Cardiac septum (tissue), 1 donor: ENCODE measurements at regions of chr21 and their contacts with region 1.

Region 1: GRCh38 chr21:42964546-42965225 is 9.7 kb upstream of the PKNOX1 start:
- DNase-seq: no peak

Region 2: GRCh38 chr21:42923541-42924432 is 40.9 kb before region 1 on chr21:
- intact Hi-C with region 1: no loop called
- DNase-seq: peak; percentile 75

Region 3: DNA sequence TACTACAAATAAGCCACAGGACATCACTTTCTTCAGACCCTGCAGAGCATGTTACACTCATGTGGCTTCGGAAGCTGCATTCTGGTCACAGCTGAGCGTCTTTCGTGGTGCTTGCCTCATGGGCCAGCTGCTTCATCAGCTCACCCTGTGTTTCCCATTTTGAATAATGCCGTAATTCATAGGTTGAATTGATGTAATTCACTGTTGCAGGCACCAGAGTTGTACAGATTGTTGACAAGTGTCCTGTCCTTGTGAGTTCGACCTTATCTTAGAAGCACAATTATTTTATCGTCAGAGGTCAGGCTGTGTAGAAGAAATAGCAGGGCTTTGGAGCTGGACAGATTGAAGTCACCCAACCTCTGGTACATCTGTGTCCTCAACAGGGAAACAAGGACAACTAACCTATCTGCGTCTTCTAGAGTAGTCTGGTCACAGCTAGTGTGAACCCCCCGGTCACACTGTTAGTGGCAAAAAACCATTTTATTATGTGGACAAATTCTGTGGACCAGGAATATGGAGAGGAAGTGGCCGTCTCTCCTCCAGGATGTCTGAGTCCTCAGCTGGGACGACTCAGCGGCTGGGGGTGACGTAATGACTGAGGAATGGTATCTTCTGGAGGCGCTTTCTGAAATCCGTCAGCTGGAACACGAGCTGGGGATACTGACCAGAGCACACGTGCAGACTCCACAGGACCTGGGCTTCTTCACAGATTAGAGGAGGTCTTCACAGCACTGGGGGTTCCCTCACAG is 27.5 kb after region 1 on chr21:
- intact Hi-C with region 1: no loop called
- DNase-seq: no peak

Region 4: GRCh38 chr21:43025636-43026307 is 61.1 kb after region 1 on chr21:
- intact Hi-C with region 1: loop called (anchors 10 kb)
- DNase-seq: no peak

Region 5: DNA sequence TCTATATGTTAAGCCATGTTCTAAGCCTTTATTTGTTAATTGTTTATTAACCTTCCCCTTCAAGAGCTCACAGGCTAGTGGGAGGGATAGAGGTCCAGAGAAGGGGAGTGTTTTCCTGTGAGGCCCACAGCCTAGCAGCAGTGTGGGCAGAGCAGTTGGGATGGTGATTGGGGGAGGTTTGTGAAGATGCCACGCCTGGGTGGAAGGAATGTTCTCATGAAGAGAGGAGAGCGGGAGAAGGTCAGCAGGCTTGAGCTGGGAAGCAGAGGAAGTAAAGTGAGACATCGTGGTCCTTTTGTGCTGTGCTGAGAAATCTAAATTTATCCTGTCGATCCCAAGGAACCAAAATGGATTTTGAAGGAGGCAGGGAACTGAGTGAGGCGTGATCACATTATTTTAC is 1090.0 kb after region 1 on chr21:
- intact Hi-C with region 1: no loop called
- DNase-seq: no peak